ENCODE measurements at regions of chr11 and their contacts with region 1.

Region 1: GRCh38 chr11:113896156-113896879 is 8.3 kb upstream of the HTR3B start:
- DNase-seq: peak; percentile 61
- H3K4me3 ChIP-seq: peak overlapping the region in 1 of 2 experiments; percentile 19; a peak in 1 of 4 replicates
- H3K27ac ChIP-seq: no peak overlapping the region
- H3K4me1 ChIP-seq: no peaks in the 10 kb centered on the region
- H3K27me3 ChIP-seq: no peaks in the 10 kb centered on the region; the same call in 1 of the 2 replicates
- CTCF ChIP-seq: peak; percentile 76
- EP300 ChIP-seq: no peak
- RAD21 ChIP-seq: peak; percentile 80

Region 2: GRCh38 chr11:113577356-113578032 is 318.8 kb before region 1 on chr11:
- CTCF ChIA-PET with region 1: no interaction called
- POLR2A ChIA-PET with region 1: no interaction called
- DNase-seq: peak; percentile 44
- H3K4me3 ChIP-seq: no peak overlapping the region
- H3K27ac ChIP-seq: peak overlapping the region in 1 of 2 experiments; percentile 90; a peak in 2 of 4 replicates
- H3K4me1 ChIP-seq: peaks cover 0 to 58% of the 10 kb centered on the region in 2 experiments; a peak in 1 of 4 replicates
- H3K27me3 ChIP-seq: no peaks in the 10 kb centered on the region
- CTCF ChIP-seq: no peak
- EP300 ChIP-seq: no peak
- RAD21 ChIP-seq: no peak

Region 3: DNA sequence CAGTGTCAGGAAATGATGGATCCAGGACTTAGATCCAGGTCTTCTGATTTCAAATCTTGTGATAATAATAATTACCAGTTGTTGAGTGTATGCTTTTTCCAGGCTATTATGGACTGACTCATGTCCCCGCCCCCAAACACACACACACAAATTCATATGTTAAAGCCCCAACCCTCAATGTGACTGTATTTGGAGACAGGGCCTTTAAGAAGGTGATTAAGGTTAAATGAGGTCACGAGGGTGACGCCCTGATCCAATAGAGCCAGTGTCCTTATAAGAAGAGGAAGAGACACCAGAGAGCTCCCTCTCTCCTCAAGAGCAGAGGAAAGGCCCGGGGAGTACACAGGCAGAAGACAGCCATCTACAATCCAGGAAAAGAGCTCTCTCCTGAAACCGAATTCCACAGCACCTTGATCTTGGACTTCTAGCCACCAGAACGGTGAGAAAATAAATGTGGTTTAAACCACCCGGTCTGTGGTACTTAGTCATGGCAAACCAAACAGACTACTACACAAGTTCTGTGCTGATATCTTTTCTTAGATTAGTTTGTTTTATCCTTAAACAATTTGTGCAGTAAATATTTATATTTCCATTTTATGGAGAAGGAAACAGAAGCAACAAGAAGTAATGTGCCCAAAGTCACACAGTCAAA is 198.4 kb before region 1 on chr11:
- CTCF ChIA-PET with region 1: no interaction called
- POLR2A ChIA-PET with region 1: no interaction called
- DNase-seq: no peak
- H3K4me3 ChIP-seq: no peak overlapping the region
- H3K27ac ChIP-seq: no peak overlapping the region
- H3K4me1 ChIP-seq: peaks cover 0 to 9% of the 10 kb centered on the region in 2 experiments; a peak in 1 of 4 replicates
- H3K27me3 ChIP-seq: no peaks in the 10 kb centered on the region
- CTCF ChIP-seq: no peak
- EP300 ChIP-seq: no peak
- RAD21 ChIP-seq: no peak

Region 4: GRCh38 chr11:113764527-113765219 is 131.6 kb before region 1 on chr11:
- CTCF ChIA-PET with region 1: no interaction called
- POLR2A ChIA-PET with region 1: no interaction called
- DNase-seq: no peak
- H3K4me3 ChIP-seq: no peak overlapping the region
- H3K27ac ChIP-seq: no peak overlapping the region
- H3K4me1 ChIP-seq: no peaks in the 10 kb centered on the region
- H3K27me3 ChIP-seq: no peaks in the 10 kb centered on the region
- CTCF ChIP-seq: no peak
- EP300 ChIP-seq: no peak
- RAD21 ChIP-seq: no peak

Region 5: DNA sequence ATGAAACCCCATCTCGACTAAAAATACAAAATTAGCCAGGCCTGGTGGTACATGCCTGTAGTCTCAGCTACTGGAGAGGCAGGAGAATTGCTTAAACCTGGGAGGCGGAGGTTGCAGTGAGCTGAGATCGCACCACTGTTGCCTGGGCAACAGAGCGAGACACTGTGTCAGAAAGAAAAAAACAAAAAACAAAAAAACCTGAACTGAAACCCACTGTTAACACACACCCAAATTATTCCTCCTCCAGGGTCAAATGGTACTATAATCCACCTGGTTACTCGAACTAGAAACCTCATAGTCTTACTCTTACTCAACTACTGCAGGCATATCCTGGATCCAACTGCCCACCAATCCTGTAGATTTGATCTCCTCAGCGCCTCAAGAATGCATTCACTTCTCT is 56.5 kb before region 1 on chr11:
- CTCF ChIA-PET with region 1: no interaction called
- POLR2A ChIA-PET with region 1: no interaction called
- DNase-seq: no peak
- H3K4me3 ChIP-seq: no peak overlapping the region
- H3K27ac ChIP-seq: no peak overlapping the region
- H3K4me1 ChIP-seq: no peaks in the 10 kb centered on the region
- H3K27me3 ChIP-seq: no peaks in the 10 kb centered on the region
- CTCF ChIP-seq: no peak
- EP300 ChIP-seq: no peak
- RAD21 ChIP-seq: no peak

Region 6: GRCh38 chr11:113884361-113884836 is 11.9 kb before region 1 on chr11:
- CTCF ChIA-PET with region 1: interaction called, 29 read pairs
- POLR2A ChIA-PET with region 1: no interaction called
- DNase-seq: no peak
- H3K4me3 ChIP-seq: no peak overlapping the region
- H3K27ac ChIP-seq: no peak overlapping the region
- H3K4me1 ChIP-seq: no peaks in the 10 kb centered on the region
- H3K27me3 ChIP-seq: no peaks in the 10 kb centered on the region
- CTCF ChIP-seq: no peak
- EP300 ChIP-seq: no peak
- RAD21 ChIP-seq: no peak

Region 7: GRCh38 chr11:113952588-113952987 is 56.3 kb after region 1 on chr11:
- CTCF ChIA-PET with region 1: interaction called, 11 read pairs
- POLR2A ChIA-PET with region 1: no interaction called
- DNase-seq: no peak
- H3K4me3 ChIP-seq: no peak overlapping the region
- H3K27ac ChIP-seq: no peak overlapping the region
- H3K4me1 ChIP-seq: peaks cover 0 to 15% of the 10 kb centered on the region in 2 experiments; a peak in 1 of 4 replicates
- H3K27me3 ChIP-seq: no peaks in the 10 kb centered on the region
- CTCF ChIP-seq: no peak
- EP300 ChIP-seq: no peak
- RAD21 ChIP-seq: no peak

Region 8: GRCh38 chr11:113994077-113994954 is 98.0 kb after region 1 on chr11:
- CTCF ChIA-PET with region 1: interaction called, 56 read pairs
- POLR2A ChIA-PET with region 1: no interaction called
- DNase-seq: peak; percentile 71
- H3K4me3 ChIP-seq: no peak overlapping the region
- H3K27ac ChIP-seq: no peak overlapping the region
- H3K4me1 ChIP-seq: peaks cover 0 to 16% of the 10 kb centered on the region in 2 experiments; a peak in 1 of 4 replicates
- H3K27me3 ChIP-seq: no peaks in the 10 kb centered on the region
- CTCF ChIP-seq: peak; percentile 79
- EP300 ChIP-seq: no peak
- RAD21 ChIP-seq: peak; percentile 74

Region 9: GRCh38 chr11:114036156-114036811 is 140.0 kb after region 1 on chr11:
- CTCF ChIA-PET with region 1: interaction called, 51 read pairs
- POLR2A ChIA-PET with region 1: no interaction called
- DNase-seq: peak; percentile 90
- H3K4me3 ChIP-seq: peak overlapping the region; percentile 19 to 66; a peak in 3 of 4 replicates
- H3K27ac ChIP-seq: no peak overlapping the region
- H3K4me1 ChIP-seq: peaks cover 3% of the 10 kb centered on the region in 2 experiments; a peak in 2 of 4 replicates
- H3K27me3 ChIP-seq: peaks cover 25% of the 10 kb centered on the region; the same call in 1 of the 2 replicates
- CTCF ChIP-seq: peak; percentile 82
- EP300 ChIP-seq: no peak
- RAD21 ChIP-seq: peak; percentile 85

Measured in SK-N-SH (cell line).